ENCODE measurements at regions of chr6 and their contacts with region 1.

Region 1: DNA sequence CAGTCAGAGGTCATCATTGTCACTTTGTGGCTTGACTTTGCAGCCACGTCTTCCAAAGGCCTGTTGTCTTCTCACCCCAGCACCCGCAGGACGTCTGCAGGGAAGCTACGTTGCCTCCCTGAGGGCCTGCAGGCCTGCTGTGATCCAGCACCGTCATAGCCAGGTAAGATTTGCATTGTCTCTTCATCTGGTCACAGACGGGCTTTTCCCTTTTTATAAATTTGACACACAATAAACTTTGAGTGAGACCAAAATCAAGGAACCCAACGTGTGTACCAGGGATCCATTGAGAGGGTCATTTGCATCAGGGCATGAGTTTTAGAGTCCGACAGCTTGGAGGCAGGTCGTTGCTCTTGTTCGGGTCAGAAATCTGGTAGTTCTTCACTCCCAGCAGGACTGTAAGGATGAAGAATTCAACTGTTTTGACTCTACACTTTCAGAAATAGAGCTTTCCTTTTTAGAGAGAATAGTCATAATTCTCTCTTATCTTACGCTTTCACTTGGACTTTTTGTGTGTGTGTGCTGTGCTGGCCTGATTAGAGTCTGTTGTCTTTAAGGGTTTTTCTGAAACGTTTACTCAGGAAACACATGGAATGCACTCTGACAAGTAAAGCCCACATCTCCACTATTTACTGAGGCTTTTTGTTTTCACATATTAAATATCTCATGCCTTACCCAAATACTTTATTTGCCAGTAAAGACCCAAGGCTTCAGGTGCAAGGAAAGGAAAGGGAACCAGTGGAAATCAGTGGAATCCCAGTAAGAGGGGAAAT is 177.2 kb upstream of the TAB2 start:
- DNase-seq: peak; percentile 58
- ATAC-seq: peak; percentile 66
- H3K4me3 Mint-ChIP-seq: peak overlapping the region; percentile 76
- H3K27ac Mint-ChIP-seq: peak overlapping the region; percentile 99
- H3K4me1 Mint-ChIP-seq: peaks cover 61% of the 10 kb centered on the region
- H3K27me3 Mint-ChIP-seq: no peaks in the 10 kb centered on the region

Region 2: GRCh38 chr6:149094156-149094555 is 46.2 kb before region 1 on chr6:
- CTCF ChIA-PET with region 1: interaction called, 3 read pairs
- POLR2A ChIA-PET with region 1: interaction called, 26 read pairs
- DNase-seq: no peak
- ATAC-seq: no peak
- H3K4me3 Mint-ChIP-seq: peak overlapping the region; percentile 54
- H3K27ac Mint-ChIP-seq: peak overlapping the region; percentile 89
- H3K4me1 Mint-ChIP-seq: peaks cover 79% of the 10 kb centered on the region
- H3K27me3 Mint-ChIP-seq: no peaks in the 10 kb centered on the region

Region 3: GRCh38 chr6:149129371-149130077 is 10.8 kb before region 1 on chr6:
- CTCF ChIA-PET with region 1: interaction called, 24 read pairs
- POLR2A ChIA-PET with region 1: interaction called, 28 read pairs
- DNase-seq: peak; percentile 20
- ATAC-seq: no peak
- H3K4me3 Mint-ChIP-seq: no peak overlapping the region
- H3K27ac Mint-ChIP-seq: peak overlapping the region; percentile 83
- H3K4me1 Mint-ChIP-seq: peaks cover 61% of the 10 kb centered on the region
- H3K27me3 Mint-ChIP-seq: no peaks in the 10 kb centered on the region

Measured in activated CD8-positive, alpha-beta T cell treated with anti-CD3 and anti-CD28 coated beads, Interleukin-2, amount 10 ng/mL, durations not matched to agents 7 days and 5 days (primary cell).